A549 (cell line): ENCODE measurements at regions of chr2 and their contacts with region 1.

Region 1: DNA sequence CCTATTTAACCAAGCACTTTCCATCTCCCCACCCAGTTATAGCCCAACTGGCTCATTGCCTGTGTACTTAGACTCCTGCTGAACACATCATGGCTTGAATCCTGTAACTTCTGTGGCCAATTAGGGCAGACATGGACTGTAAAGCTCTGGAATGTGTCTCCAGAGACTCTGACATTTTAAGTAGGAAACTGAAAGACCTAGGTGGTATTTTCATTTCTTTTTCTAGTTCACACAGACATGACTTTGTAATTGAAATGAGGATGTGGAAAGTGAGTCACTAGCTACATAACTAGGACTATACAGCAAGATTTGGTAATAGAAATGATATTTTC is 12.2 kb downstream of the DOK1 start:
- DNase-seq: no peak
- ATAC-seq: no peak
- H3K4me3 ChIP-seq: no peak overlapping the region
- H3K27ac ChIP-seq: no peak overlapping the region
- H3K4me1 ChIP-seq: no peaks in the 10 kb centered on the region
- CTCF ChIP-seq: no peak
- EP300 ChIP-seq: no peak
- POLR2A ChIP-seq: no peak
- RAD21 ChIP-seq: no peak

Region 2: GRCh38 chr2:74142340-74142739 is 424.4 kb before region 1 on chr2:
- CTCF ChIA-PET with region 1: no interaction called
- POLR2A ChIA-PET with region 1: no interaction called
- DNase-seq: peak; percentile 41 to 62
- ATAC-seq: peak; percentile 64 to 74; a peak in 5 of 6 replicates
- H3K4me3 ChIP-seq: no peak overlapping the region
- H3K27ac ChIP-seq: no peak overlapping the region
- H3K4me1 ChIP-seq: peaks cover 9% of the 10 kb centered on the region; the same call in 2 of the 3 replicates
- CTCF ChIP-seq: no peak; the same call in 2 of the 3 replicates
- EP300 ChIP-seq: no peak
- POLR2A ChIP-seq: no peak
- RAD21 ChIP-seq: peak in 1 of 2 experiments; percentile 30; a peak in 1 of 5 replicates

Region 3: GRCh38 chr2:74553892-74554645 is 12.7 kb before region 1 on chr2 and contains the start of gene LOXL3:
- CTCF ChIA-PET with region 1: interaction called, 19 read pairs
- POLR2A ChIA-PET with region 1: no interaction called
- DNase-seq: peak; percentile 80
- ATAC-seq: peak; percentile 73 to 84
- H3K4me3 ChIP-seq: peak within 1 kb of the TSS; percentile 56
- H3K27ac ChIP-seq: peak within 1 kb of the TSS; percentile 63 to 96
- H3K4me1 ChIP-seq: peaks cover 14% of the 10 kb centered on the region; the same call in 2 of the 3 replicates
- CTCF ChIP-seq: no peak
- EP300 ChIP-seq: no peak
- POLR2A ChIP-seq: no peak
- RAD21 ChIP-seq: no peak
- polyA plus RNA-seq, gene LOXL3: 0.30 and 0.40 TPM in 2 replicates

Region 4: GRCh38 chr2:74619651-74620297 is 53.1 kb after region 1 on chr2:
- CTCF ChIA-PET with region 1: no interaction called
- POLR2A ChIA-PET with region 1: no interaction called
- DNase-seq: no peak
- ATAC-seq: no peak
- H3K4me3 ChIP-seq: no peak overlapping the region
- H3K27ac ChIP-seq: no peak overlapping the region
- H3K4me1 ChIP-seq: no peaks in the 10 kb centered on the region
- CTCF ChIP-seq: no peak
- EP300 ChIP-seq: no peak
- POLR2A ChIP-seq: no peak
- RAD21 ChIP-seq: no peak